ENCODE measurements at regions of chr1 and their contacts with region 1.

Region 1: GRCh38 chr1:155208541-155209311 is at the start of gene MTX1:
- DNase-seq: peak; percentile 90 to 96 (median 91)
- H3K4me3 ChIP-seq: peak within 1 kb of the TSS; percentile 68 to 100
- H3K4me3 Mint-ChIP-seq: peak within 1 kb of the TSS; percentile 86 to 92 (median 89)
- H3K27ac ChIP-seq: peak within 1 kb of the TSS; percentile 100
- H3K27ac Mint-ChIP-seq: peak within 1 kb of the TSS; percentile 95 to 98 (median 98)
- H3K4me1 ChIP-seq: peaks cover 29% of the 10 kb centered on the region
- H3K4me1 Mint-ChIP-seq: peaks cover 17 to 29% (median 24%) of the 10 kb centered on the region in 4 donors
- H3K27me3 ChIP-seq: no peaks in the 10 kb centered on the region
- H3K27me3 Mint-ChIP-seq: no peaks in the 10 kb centered on the region
- total RNA-seq, gene MTX1: 17.7 to 18.2 TPM

Region 2: GRCh38 chr1:155193275-155193990 is 15.3 kb before region 1 on chr1:
- CTCF ChIA-PET with region 1: interaction called, 40 read pairs
- POLR2A ChIA-PET with region 1: interaction called, 58 read pairs
- intact Hi-C with region 1: loop called (anchors 1 kb)
- DNase-seq: peak; percentile 60 to 72 (median 62)
- H3K4me3 ChIP-seq: peak overlapping the region; percentile 58 to 73
- H3K4me3 Mint-ChIP-seq: peak overlapping the region; percentile 87 to 97 (median 92)
- H3K27ac ChIP-seq: peak overlapping the region; percentile 67
- H3K27ac Mint-ChIP-seq: peak overlapping the region; percentile 91 to 99 (median 98)
- H3K4me1 ChIP-seq: peaks cover 27% of the 10 kb centered on the region
- H3K4me1 Mint-ChIP-seq: peaks cover 19 to 38% (median 24%) of the 10 kb centered on the region in 4 donors
- H3K27me3 ChIP-seq: no peaks in the 10 kb centered on the region
- H3K27me3 Mint-ChIP-seq: no peaks in the 10 kb centered on the region

Region 3: GRCh38 chr1:155227261-155228095 is 18.8 kb after region 1 on chr1:
- CTCF ChIA-PET with region 1: interaction called, 106 read pairs
- POLR2A ChIA-PET with region 1: interaction called, 89 read pairs
- intact Hi-C with region 1: loop called (anchors 1 kb)
- DNase-seq: peak; percentile 94 to 99 (median 98)
- H3K4me3 ChIP-seq: peak overlapping the region; percentile 80 to 86
- H3K4me3 Mint-ChIP-seq: peak overlapping the region; percentile 78 to 93 (median 88)
- H3K27ac ChIP-seq: peak overlapping the region; percentile 69
- H3K27ac Mint-ChIP-seq: peak overlapping the region; percentile 77 to 97 (median 93)
- H3K4me1 ChIP-seq: peaks cover 19% of the 10 kb centered on the region
- H3K4me1 Mint-ChIP-seq: peaks cover 14 to 34% (median 25%) of the 10 kb centered on the region in 4 donors
- H3K27me3 ChIP-seq: no peaks in the 10 kb centered on the region
- H3K27me3 Mint-ChIP-seq: no peaks in the 10 kb centered on the region

Region 4: DNA sequence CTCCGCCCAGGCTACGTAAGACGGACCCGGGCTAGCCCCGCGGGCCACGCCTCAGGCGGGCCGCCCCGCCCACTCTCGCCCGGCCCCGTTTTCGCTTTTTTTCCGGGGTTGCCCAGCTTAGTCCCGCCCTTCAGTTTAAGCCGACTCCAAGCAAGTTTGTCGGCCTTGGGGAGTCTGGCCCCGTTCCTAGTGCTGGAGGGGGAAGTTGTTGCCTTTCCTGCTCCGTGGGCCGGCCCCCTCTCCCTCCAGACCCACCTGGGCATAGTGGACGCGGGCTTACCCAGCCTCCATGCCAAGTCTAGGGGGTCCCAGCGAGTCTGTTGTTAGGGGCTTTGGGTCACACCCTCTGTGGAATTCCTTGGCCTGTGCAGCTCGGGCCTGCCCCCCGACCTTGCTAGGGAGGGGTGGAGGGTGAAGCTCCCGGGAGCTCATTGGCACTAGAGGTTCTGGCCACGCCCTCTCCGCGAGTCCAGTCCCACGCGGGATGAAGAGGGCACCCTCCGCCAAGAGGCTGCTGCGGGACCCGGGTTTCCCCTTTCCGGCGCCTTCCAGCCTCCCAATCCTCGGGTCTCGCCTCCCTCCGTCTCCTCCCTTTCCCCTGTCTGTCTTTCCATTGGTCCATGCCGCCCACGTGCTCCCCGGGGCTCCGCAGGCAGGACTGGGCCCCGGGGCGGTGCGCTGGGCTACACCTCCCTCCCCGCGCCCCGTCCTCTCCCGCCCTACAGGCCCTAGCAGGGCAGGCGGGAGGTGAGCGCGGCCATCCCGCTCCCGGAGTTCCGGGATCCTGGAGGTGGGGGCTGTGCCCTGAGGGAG is 115.3 kb after region 1 on chr1:
- CTCF ChIA-PET with region 1: interaction called, 5 read pairs
- POLR2A ChIA-PET with region 1: interaction called, 12 read pairs
- intact Hi-C with region 1: loop called (anchors 1 kb)
- DNase-seq: peak; percentile 83 to 93 (median 85)
- H3K4me3 ChIP-seq: peak overlapping the region; percentile 91 to 96
- H3K4me3 Mint-ChIP-seq: peak overlapping the region; percentile 70 to 91 (median 88)
- H3K27ac ChIP-seq: peak overlapping the region; percentile 96
- H3K27ac Mint-ChIP-seq: peak overlapping the region; percentile 82 to 93 (median 90)
- H3K4me1 ChIP-seq: peaks cover 31% of the 10 kb centered on the region
- H3K4me1 Mint-ChIP-seq: peaks cover 14 to 46% (median 29%) of the 10 kb centered on the region in 4 donors
- H3K27me3 ChIP-seq: no peaks in the 10 kb centered on the region
- H3K27me3 Mint-ChIP-seq: no peaks in the 10 kb centered on the region

Region 5: GRCh38 chr1:155591770-155592169 is 383.0 kb after region 1 on chr1:
- CTCF ChIA-PET with region 1: interaction called, 5 read pairs
- POLR2A ChIA-PET with region 1: no interaction called
- intact Hi-C with region 1: loop called (anchors 2 kb)
- DNase-seq: peak in 4 of 5 donors; percentile 59 to 68 (median 62)
- H3K4me3 ChIP-seq: no peak overlapping the region
- H3K4me3 Mint-ChIP-seq: no peak overlapping the region
- H3K27ac ChIP-seq: no peak overlapping the region
- H3K27ac Mint-ChIP-seq: no peak overlapping the region
- H3K4me1 ChIP-seq: no peaks in the 10 kb centered on the region
- H3K4me1 Mint-ChIP-seq: peaks cover 0 to 3% (median 3%) of the 10 kb centered on the region in 4 donors
- H3K27me3 ChIP-seq: no peaks in the 10 kb centered on the region
- H3K27me3 Mint-ChIP-seq: no peaks in the 10 kb centered on the region

Region 6: GRCh38 chr1:156001682-156002171 is 793.0 kb after region 1 on chr1:
- CTCF ChIA-PET with region 1: no interaction called
- POLR2A ChIA-PET with region 1: no interaction called
- intact Hi-C with region 1: no loop called
- DNase-seq: no peak
- H3K4me3 ChIP-seq: no peak overlapping the region
- H3K4me3 Mint-ChIP-seq: no peak overlapping the region
- H3K27ac ChIP-seq: no peak overlapping the region
- H3K27ac Mint-ChIP-seq: peak overlapping the region in 4 of 7 donors; percentile 26 to 90 (median 54)
- H3K4me1 ChIP-seq: peaks cover 17% of the 10 kb centered on the region
- H3K4me1 Mint-ChIP-seq: peaks cover 13 to 31% (median 19%) of the 10 kb centered on the region in 4 donors
- H3K27me3 ChIP-seq: no peaks in the 10 kb centered on the region
- H3K27me3 Mint-ChIP-seq: no peaks in the 10 kb centered on the region